Gastrocnemius medialis (tissue), 4 donors: ENCODE measurements at regions of chr7 and their contacts with region 1.

Region 1: DNA sequence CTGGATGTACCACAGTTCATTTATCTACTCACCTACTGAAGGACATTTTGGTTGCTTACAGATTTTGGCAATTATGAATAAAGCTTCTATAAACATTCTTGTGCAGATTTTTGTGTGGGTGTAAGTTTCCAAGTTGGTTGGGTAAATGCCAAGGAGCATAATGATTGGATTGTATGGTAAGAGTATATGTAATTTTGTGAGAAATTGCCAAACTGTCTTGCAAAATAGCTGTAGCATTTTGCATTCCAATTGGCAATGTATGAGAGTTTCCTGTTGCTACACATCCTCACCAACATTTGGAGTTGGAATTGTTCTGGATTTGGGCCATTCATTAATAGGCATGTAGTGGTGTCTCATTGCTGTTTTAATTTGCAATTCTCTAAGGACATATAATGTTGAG is 33.9 kb upstream of the HYAL4 start:
- DNase-seq: no peak
- ATAC-seq: no peak
- H3K4me3 ChIP-seq: no peak overlapping the region
- H3K27ac ChIP-seq: no peak overlapping the region
- H3K4me1 ChIP-seq: no peaks in the 10 kb centered on the region
- H3K27me3 ChIP-seq: no peaks in the 10 kb centered on the region
- CTCF ChIP-seq: no peak
- POLR2A ChIP-seq: no peak

Region 2: GRCh38 chr7:123879628-123880027 is 68.6 kb after region 1 on chr7:
- in situ Hi-C with region 1: no loop called
- intact Hi-C with region 1: loop called (anchors 2 kb)
- DNase-seq: no peak
- ATAC-seq: peak; percentile 91 to 98
- H3K4me3 ChIP-seq: no peak overlapping the region
- H3K27ac ChIP-seq: peak overlapping the region in 3 of 4 donors; percentile 46 to 68 (median 47)
- H3K4me1 ChIP-seq: peaks cover 0 to 4% of the 10 kb centered on the region in 2 donors
- H3K27me3 ChIP-seq: no peaks in the 10 kb centered on the region
- CTCF ChIP-seq: no peak
- POLR2A ChIP-seq: no peak